T-cell (primary cell): ENCODE measurements at regions of chrX and their contacts with region 1.

Region 1: GRCh38 chrX:45889471-45889870 is 655.8 kb downstream of the ZNF674 start:
- DNase-seq: no peak
- ATAC-seq: no peak
- H3K4me3 ChIP-seq: no peak overlapping the region
- H3K4me3 Mint-ChIP-seq: no peak overlapping the region
- H3K27ac ChIP-seq: no peak overlapping the region
- H3K27ac Mint-ChIP-seq: no peak overlapping the region
- H3K4me1 ChIP-seq: no peaks in the 10 kb centered on the region
- H3K4me1 Mint-ChIP-seq: no peaks in the 10 kb centered on the region
- H3K27me3 ChIP-seq: no peaks in the 10 kb centered on the region
- H3K27me3 Mint-ChIP-seq: peaks cover 0 to 4% of the 10 kb centered on the region in 2 donors

Region 2: DNA sequence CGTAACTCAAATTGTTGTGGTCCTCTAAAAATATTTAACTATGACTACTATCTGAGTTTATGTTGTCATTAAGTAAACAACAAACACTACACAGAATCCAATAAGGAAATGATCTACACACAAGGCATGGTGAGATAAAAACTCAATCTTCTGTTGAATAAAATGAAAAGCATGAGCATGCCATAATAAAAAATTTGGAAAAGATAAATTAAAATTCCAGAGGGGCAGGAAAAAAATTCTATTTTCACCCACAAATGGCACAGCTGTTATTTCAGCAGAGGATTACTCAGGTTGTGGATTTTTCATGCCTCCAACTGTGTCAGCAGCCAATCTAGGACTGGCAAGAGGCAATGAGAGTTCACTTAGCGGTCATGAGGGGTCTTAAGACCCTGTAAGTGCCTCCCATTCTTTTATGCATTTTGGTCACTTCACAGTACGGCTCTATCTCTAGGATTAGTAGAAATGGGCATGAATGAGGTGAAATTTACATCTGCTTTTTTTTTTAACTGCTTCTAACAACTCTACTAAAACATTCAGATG is 49.0 kb before region 1 on chrX:
- CTCF ChIA-PET with region 1: interaction called in 1 of 2 experiments, 10 read pairs
- POLR2A ChIA-PET with region 1: no interaction called
- DNase-seq: no peak
- ATAC-seq: no peak
- H3K4me3 ChIP-seq: no peak overlapping the region
- H3K4me3 Mint-ChIP-seq: no peak overlapping the region
- H3K27ac ChIP-seq: no peak overlapping the region
- H3K27ac Mint-ChIP-seq: no peak overlapping the region
- H3K4me1 ChIP-seq: peaks cover 0 to 5% of the 10 kb centered on the region in 2 experiments
- H3K4me1 Mint-ChIP-seq: peaks cover 7 to 20% (median 8%) of the 10 kb centered on the region in 3 donors
- H3K27me3 ChIP-seq: no peaks in the 10 kb centered on the region
- H3K27me3 Mint-ChIP-seq: no peaks in the 10 kb centered on the region